ENCODE measurements at regions of chr5 and their contacts with region 1.

Region 1: GRCh38 chr5:119411935-119412602 is 40.2 kb upstream of the HSD17B4 start:
- DNase-seq: peak; percentile 65
- ATAC-seq: peak; percentile 78
- H3K4me3 ChIP-seq: peak overlapping the region; percentile 62
- H3K27ac ChIP-seq: peak overlapping the region; percentile 52
- H3K4me1 ChIP-seq: peaks cover 29% of the 10 kb centered on the region
- H3K27me3 ChIP-seq: no peaks in the 10 kb centered on the region
- CTCF ChIP-seq: peak; percentile 82 to 93 (median 88)
- EP300 ChIP-seq: no peak
- POLR2A ChIP-seq: no peak
- RAD21 ChIP-seq: peak; percentile 99

Region 2: DNA sequence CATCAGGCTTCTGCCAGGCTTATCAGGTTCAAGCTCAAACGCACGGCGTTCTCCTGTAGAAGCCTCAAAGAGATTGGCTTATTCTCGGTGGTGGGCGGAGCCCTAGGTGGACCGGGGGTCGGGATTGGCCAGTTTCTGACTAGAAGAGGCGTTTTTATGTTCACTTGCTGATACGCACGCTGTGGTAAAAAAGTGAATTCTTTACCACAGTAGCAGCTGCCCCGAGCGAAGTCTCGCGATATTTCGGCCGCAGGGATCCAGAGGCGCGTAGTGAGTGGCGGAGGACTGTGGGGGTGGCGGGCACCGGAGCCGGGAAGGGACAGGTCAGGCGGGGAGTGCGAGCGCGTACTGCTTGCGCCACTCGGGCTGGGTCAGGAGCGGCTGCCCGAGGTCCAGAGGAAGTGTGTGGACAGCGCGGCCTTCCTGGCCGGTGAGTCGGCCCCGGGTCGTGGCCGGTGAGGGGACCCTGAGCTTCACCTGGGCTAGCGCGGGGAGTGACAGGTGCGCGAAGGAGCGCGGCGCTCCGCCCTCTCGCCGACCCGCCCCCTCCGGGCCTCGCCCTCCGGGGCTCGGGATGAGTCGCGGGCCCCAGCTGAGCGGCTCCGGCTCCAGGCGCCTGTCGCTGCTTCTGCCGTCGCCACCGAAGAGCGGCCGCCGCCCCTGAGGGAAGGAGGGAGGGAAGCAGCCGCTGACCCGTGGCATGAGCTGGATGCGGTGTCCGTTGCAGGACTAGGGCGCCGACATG is 341.1 kb before region 1 on chr5 and contains the start of gene DMXL1:
- CTCF ChIA-PET with region 1: interaction called, 9 read pairs
- POLR2A ChIA-PET with region 1: no interaction called
- RAD21 ChIA-PET with region 1: interaction called, 11 read pairs
- SMC1A ChIA-PET with region 1: interaction called, 14 read pairs
- in situ Hi-C with region 1: loop called (anchors 5 kb)
- intact Hi-C with region 1: loop called (anchors 2 kb)
- DNase-seq: peak; percentile 99
- ATAC-seq: peak; percentile 84
- H3K4me3 ChIP-seq: peak within 1 kb of the TSS; percentile 79
- H3K27ac ChIP-seq: peak within 1 kb of the TSS; percentile 91
- H3K4me1 ChIP-seq: peaks cover 5% of the 10 kb centered on the region
- H3K27me3 ChIP-seq: no peaks in the 10 kb centered on the region
- CTCF ChIP-seq: no peak
- EP300 ChIP-seq: 0 out of 4 replicates have a peak, but pooled peaks of 1 of the 2 experiments have one; percentile 8
- POLR2A ChIP-seq: peak; percentile 91
- RAD21 ChIP-seq: no peak
- polyA plus RNA-seq, gene DMXL1: 9.1 to 11.0 TPM

Region 3: GRCh38 chr5:119255571-119256356 is 156.3 kb before region 1 on chr5:
- CTCF ChIA-PET with region 1: interaction called, 23 read pairs
- POLR2A ChIA-PET with region 1: no interaction called
- RAD21 ChIA-PET with region 1: interaction called, 7 read pairs
- SMC1A ChIA-PET with region 1: interaction called, 21 read pairs
- in situ Hi-C with region 1: no loop called
- intact Hi-C with region 1: no loop called
- DNase-seq: no peak
- ATAC-seq: peak; percentile 84
- H3K4me3 ChIP-seq: no peak overlapping the region
- H3K27ac ChIP-seq: no peak overlapping the region
- H3K4me1 ChIP-seq: no peaks in the 10 kb centered on the region
- H3K27me3 ChIP-seq: no peaks in the 10 kb centered on the region
- CTCF ChIP-seq: peak in 2 of 3 experiments; percentile 30 to 31; a peak in 3 of 6 replicates
- EP300 ChIP-seq: no peak
- POLR2A ChIP-seq: no peak
- RAD21 ChIP-seq: peak; percentile 49

Region 4: DNA sequence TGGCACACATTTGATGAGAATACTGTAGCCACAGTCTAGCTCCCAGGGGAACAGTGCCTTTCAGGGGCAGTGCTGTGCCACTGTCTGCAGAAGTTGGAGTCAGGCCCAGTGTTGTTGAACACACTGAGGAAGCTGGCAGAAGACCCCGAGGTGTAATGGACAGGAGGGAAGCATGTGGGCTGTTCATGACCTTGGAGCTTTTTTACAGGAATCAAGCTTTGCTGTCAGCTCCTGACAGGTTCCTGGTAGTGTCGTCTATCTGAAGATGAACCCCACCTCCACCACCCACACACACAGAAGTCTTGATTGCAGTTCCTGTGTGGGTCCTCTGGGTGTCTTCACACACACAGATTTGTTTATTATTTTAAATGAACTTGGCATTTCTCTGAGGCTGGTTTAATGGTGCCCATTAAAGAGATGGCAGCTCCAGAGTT is 96.5 kb before region 1 on chr5:
- CTCF ChIA-PET with region 1: interaction called, 413 read pairs
- POLR2A ChIA-PET with region 1: interaction called, 16 read pairs
- RAD21 ChIA-PET with region 1: interaction called, 303 read pairs
- SMC1A ChIA-PET with region 1: interaction called, 393 read pairs
- in situ Hi-C with region 1: no loop called
- intact Hi-C with region 1: loop called (anchors 1 kb)
- DNase-seq: peak; percentile 69
- ATAC-seq: peak; percentile 89
- H3K4me3 ChIP-seq: no peak overlapping the region
- H3K27ac ChIP-seq: peak overlapping the region; percentile 68
- H3K4me1 ChIP-seq: peaks cover 64% of the 10 kb centered on the region
- H3K27me3 ChIP-seq: no peaks in the 10 kb centered on the region
- CTCF ChIP-seq: peak; percentile 61 to 73 (median 63); a peak in 5 of 6 replicates
- EP300 ChIP-seq: no peak
- POLR2A ChIP-seq: no peak
- RAD21 ChIP-seq: peak; percentile 87

Region 5: DNA sequence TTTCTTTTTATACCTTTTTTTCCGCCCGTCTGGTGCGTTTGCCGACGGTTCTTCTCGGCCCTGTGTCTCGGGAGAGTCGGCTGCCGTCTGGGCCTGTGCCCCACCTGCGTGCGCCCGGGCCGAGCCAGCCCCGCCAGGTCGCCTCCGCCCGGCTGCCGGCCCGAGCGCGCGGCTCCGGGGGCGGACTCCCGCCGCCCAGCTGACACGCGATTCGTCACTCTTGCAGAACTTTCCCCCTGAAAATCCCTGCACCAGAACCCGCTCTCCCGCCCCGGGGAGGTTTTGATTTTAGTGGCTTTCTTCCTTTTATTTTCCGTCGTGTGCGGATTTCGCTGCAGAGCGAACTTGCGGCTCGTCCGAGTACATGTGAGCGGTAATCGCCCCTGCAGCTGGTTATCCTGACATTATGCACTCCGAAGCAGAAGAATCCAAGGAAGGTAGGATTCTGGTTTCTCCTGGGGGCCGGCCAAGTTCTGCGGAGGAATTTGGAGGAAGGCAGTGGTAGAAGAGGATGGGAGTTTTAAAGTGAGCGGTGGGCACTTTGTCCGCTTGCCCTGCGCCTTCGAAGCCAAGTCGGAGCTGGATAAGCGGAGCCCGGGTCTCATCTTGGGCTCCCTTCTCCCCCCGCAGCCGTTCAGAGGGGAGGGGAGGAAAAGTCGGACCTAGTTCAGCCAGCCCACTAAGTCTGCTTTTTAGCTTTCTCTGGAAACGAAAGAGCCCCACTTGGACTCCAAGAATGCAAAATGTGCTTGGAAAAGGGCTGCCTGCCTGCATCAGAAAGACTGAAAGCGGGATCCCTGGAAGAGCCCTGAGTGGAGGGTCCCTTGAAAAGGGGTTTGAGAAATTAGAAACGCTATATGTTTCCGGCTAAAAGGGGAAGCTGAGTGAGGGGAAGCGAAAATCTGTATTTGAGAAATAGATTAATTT is 56.1 kb before region 1 on chr5 and contains the start of gene TNFAIP8:
- CTCF ChIA-PET with region 1: interaction called, 167 read pairs
- POLR2A ChIA-PET with region 1: interaction called, 6 read pairs
- RAD21 ChIA-PET with region 1: interaction called, 24 read pairs
- SMC1A ChIA-PET with region 1: interaction called, 214 read pairs
- in situ Hi-C with region 1: no loop called
- intact Hi-C with region 1: loop called (anchors 2 kb)
- DNase-seq: no peak
- ATAC-seq: peak; percentile 66
- H3K4me3 ChIP-seq: peak within 1 kb of the TSS; percentile 96
- H3K27ac ChIP-seq: peak within 1 kb of the TSS; percentile 92
- H3K4me1 ChIP-seq: peaks cover 40% of the 10 kb centered on the region
- H3K27me3 ChIP-seq: no peaks in the 10 kb centered on the region
- CTCF ChIP-seq: no peak
- EP300 ChIP-seq: peak in 1 of 2 experiments; percentile 61; a peak in 2 of 4 replicates
- POLR2A ChIP-seq: peak; percentile 74
- RAD21 ChIP-seq: peak; percentile 26; the same call in 1 of the 2 replicates
- polyA plus RNA-seq, gene TNFAIP8: 217 to 324 TPM

Region 6: DNA sequence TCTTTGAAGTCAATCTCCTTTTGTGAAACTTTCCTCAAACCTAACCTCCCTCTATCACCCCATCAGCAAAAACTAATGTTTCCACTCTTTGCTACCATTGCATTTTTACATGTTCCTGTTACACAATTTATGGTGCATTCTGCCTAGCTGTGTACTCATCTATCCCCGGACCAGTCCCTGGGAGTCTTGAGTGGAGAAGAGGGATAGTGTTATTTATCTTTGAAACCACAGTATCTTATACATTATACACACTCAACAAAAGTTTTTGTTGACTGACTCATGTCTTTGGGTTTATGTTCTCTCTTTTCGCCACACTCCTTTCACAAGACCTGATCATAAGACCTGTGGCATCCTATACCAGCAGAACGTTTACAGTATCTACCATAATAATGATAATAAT is 29.9 kb before region 1 on chr5:
- CTCF ChIA-PET with region 1: interaction called, 10 read pairs
- POLR2A ChIA-PET with region 1: interaction called, 3 read pairs
- RAD21 ChIA-PET with region 1: interaction called, 4 read pairs
- SMC1A ChIA-PET with region 1: interaction called, 27 read pairs
- in situ Hi-C with region 1: no loop called
- intact Hi-C with region 1: no loop called
- DNase-seq: no peak
- ATAC-seq: no peak
- H3K4me3 ChIP-seq: no peak overlapping the region
- H3K27ac ChIP-seq: peak overlapping the region; percentile 4; the same call in 1 of the 2 replicates
- H3K4me1 ChIP-seq: peaks cover 29% of the 10 kb centered on the region
- H3K27me3 ChIP-seq: no peaks in the 10 kb centered on the region
- CTCF ChIP-seq: no peak
- EP300 ChIP-seq: no peak
- POLR2A ChIP-seq: no peak
- RAD21 ChIP-seq: no peak

Region 7: GRCh38 chr5:119578937-119579336 is 166.9 kb after region 1 on chr5:
- CTCF ChIA-PET with region 1: no interaction called
- POLR2A ChIA-PET with region 1: no interaction called
- RAD21 ChIA-PET with region 1: no interaction called
- SMC1A ChIA-PET with region 1: no interaction called
- in situ Hi-C with region 1: no loop called
- intact Hi-C with region 1: no loop called
- DNase-seq: no peak
- ATAC-seq: peak; percentile 98
- H3K4me3 ChIP-seq: no peak overlapping the region
- H3K27ac ChIP-seq: no peak overlapping the region
- H3K4me1 ChIP-seq: no peaks in the 10 kb centered on the region
- H3K27me3 ChIP-seq: no peaks in the 10 kb centered on the region
- CTCF ChIP-seq: peak; percentile 21 to 36 (median 27); a peak in 3 of 6 replicates
- EP300 ChIP-seq: no peak
- POLR2A ChIP-seq: no peak
- RAD21 ChIP-seq: peak; percentile 22; the same call in 1 of the 2 replicates

Region 8: GRCh38 chr5:119743927-119744326 is 331.9 kb after region 1 on chr5:
- CTCF ChIA-PET with region 1: no interaction called
- POLR2A ChIA-PET with region 1: no interaction called
- RAD21 ChIA-PET with region 1: no interaction called
- SMC1A ChIA-PET with region 1: no interaction called
- in situ Hi-C with region 1: no loop called
- intact Hi-C with region 1: loop called (anchors 5 kb)
- DNase-seq: peak; percentile 48
- ATAC-seq: peak; percentile 93
- H3K4me3 ChIP-seq: no peak overlapping the region
- H3K27ac ChIP-seq: no peak overlapping the region
- H3K4me1 ChIP-seq: no peaks in the 10 kb centered on the region
- H3K27me3 ChIP-seq: no peaks in the 10 kb centered on the region; a peak in 1 of 4 replicates
- CTCF ChIP-seq: peak; percentile 62 to 73 (median 73); a peak in 5 of 6 replicates
- EP300 ChIP-seq: no peak
- POLR2A ChIP-seq: no peak
- RAD21 ChIP-seq: peak; percentile 76

Measured in GM12878 (cell line).